T-cell (primary cell): ENCODE measurements at regions of chr2 and their contacts with region 1.

Region 1: DNA sequence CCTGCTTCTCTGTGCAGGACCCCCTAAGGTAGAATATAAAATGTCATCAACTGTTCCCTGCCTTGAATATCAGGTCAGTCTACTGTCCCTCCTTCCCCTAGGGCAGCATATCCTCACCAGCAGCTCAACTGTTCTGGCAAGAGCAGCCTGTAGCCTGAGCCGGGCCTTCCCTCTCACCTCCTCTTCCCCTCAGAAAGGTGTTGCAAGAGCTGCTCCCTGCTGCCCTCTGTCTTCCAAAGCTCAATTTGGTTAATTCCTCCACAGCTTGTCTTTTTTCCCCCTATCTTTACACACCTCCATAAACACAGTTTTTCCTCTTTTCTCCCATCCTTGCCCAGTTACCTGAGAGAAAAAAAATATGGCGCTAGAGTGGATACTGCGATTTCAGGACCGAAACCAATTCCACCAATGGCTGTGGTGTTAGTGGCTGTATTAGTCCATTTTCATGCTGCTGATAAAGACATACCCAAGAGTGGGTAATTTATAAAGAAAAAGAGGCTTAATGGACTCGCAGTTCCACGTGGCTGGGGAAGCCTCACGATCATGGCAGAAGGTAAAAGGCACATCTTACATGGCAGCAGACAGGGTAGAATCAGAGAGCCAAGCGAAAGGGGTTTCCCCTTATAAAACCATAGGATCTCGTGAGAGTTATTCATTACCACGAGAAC is 184.7 kb downstream of the MREG start:
- DNase-seq: peak in 27 of 35 experiments; percentile 0 to 59 (median 25)
- ATAC-seq: peak in 2 of 4 experiments; percentile 50 to 53
- H3K4me3 ChIP-seq: no peak overlapping the region
- H3K4me3 Mint-ChIP-seq: no peak overlapping the region
- H3K27ac ChIP-seq: no peak overlapping the region
- H3K27ac Mint-ChIP-seq: no peak overlapping the region
- H3K4me1 ChIP-seq: no peaks in the 10 kb centered on the region
- H3K4me1 Mint-ChIP-seq: peaks cover 0 to 5% (median 1%) of the 10 kb centered on the region in 3 donors
- H3K27me3 ChIP-seq: peaks cover 0 to 2% of the 10 kb centered on the region in 2 experiments
- H3K27me3 Mint-ChIP-seq: no peaks in the 10 kb centered on the region

Region 2: DNA sequence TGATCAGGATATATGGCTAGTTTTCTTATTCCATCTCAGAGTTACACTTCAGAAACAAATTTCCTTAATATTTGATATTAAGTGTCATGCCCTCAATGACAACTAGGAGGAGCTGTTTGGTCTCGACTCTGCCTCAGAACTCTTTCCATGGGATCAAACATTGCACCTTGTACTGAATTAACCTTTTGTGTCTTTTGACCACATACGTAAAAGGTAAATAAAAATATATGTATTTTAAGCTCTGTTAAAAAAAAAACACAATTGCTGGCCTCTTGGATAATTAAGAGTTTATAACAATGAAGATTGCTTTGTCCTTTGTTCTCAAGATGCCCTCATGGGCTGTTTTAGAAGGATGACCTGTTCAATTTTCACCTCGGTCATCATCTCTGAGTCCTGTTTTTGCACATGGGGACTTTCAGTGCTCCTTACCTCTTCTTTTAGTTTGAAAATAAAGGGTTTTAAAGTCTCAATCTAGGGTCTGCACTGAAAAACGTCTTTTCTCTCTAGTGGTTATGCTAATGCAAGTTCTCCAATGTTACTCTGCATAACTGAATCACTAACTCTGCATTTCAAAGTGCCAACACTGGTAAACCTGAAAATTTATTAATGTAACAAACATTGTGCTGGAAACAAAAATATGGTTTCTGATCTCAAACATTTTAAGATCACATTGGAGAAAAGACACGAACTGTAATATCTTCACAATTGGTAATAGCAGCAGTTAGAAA is 374.0 kb before region 1 on chr2:
- CTCF ChIA-PET with region 1: interaction called in 1 of 2 experiments, 46 read pairs
- POLR2A ChIA-PET with region 1: no interaction called
- DNase-seq: peak in 1 of 35 experiments; percentile 53
- ATAC-seq: no peak
- H3K4me3 ChIP-seq: no peak overlapping the region
- H3K4me3 Mint-ChIP-seq: no peak overlapping the region
- H3K27ac ChIP-seq: no peak overlapping the region
- H3K27ac Mint-ChIP-seq: no peak overlapping the region
- H3K4me1 ChIP-seq: no peaks in the 10 kb centered on the region
- H3K4me1 Mint-ChIP-seq: no peaks in the 10 kb centered on the region
- H3K27me3 ChIP-seq: peaks cover 0 to 6% of the 10 kb centered on the region in 2 experiments
- H3K27me3 Mint-ChIP-seq: peaks cover 10 to 20% of the 10 kb centered on the region in 2 donors

Region 3: GRCh38 chr2:215812966-215813365 is 15.7 kb before region 1 on chr2:
- CTCF ChIA-PET with region 1: no interaction called
- POLR2A ChIA-PET with region 1: no interaction called
- DNase-seq: no peak
- ATAC-seq: no peak
- H3K4me3 ChIP-seq: no peak overlapping the region
- H3K4me3 Mint-ChIP-seq: no peak overlapping the region
- H3K27ac ChIP-seq: no peak overlapping the region
- H3K27ac Mint-ChIP-seq: no peak overlapping the region
- H3K4me1 ChIP-seq: peaks cover 10 to 16% of the 10 kb centered on the region in 2 experiments
- H3K4me1 Mint-ChIP-seq: peaks cover 15 to 25% (median 17%) of the 10 kb centered on the region in 3 donors
- H3K27me3 ChIP-seq: no peaks in the 10 kb centered on the region
- H3K27me3 Mint-ChIP-seq: peaks cover 8 to 11% of the 10 kb centered on the region in 2 donors

Region 4: GRCh38 chr2:215843579-215843978 is 14.9 kb after region 1 on chr2:
- CTCF ChIA-PET with region 1: no interaction called
- POLR2A ChIA-PET with region 1: no interaction called
- DNase-seq: no peak
- ATAC-seq: no peak
- H3K4me3 ChIP-seq: no peak overlapping the region
- H3K4me3 Mint-ChIP-seq: no peak overlapping the region
- H3K27ac ChIP-seq: no peak overlapping the region
- H3K27ac Mint-ChIP-seq: no peak overlapping the region
- H3K4me1 ChIP-seq: no peaks in the 10 kb centered on the region
- H3K4me1 Mint-ChIP-seq: no peaks in the 10 kb centered on the region
- H3K27me3 ChIP-seq: peaks cover 0 to 8% of the 10 kb centered on the region in 2 experiments
- H3K27me3 Mint-ChIP-seq: peaks cover 0 to 4% of the 10 kb centered on the region in 2 donors